ENCODE measurements at regions of chr3 and their contacts with region 1.

Region 1: DNA sequence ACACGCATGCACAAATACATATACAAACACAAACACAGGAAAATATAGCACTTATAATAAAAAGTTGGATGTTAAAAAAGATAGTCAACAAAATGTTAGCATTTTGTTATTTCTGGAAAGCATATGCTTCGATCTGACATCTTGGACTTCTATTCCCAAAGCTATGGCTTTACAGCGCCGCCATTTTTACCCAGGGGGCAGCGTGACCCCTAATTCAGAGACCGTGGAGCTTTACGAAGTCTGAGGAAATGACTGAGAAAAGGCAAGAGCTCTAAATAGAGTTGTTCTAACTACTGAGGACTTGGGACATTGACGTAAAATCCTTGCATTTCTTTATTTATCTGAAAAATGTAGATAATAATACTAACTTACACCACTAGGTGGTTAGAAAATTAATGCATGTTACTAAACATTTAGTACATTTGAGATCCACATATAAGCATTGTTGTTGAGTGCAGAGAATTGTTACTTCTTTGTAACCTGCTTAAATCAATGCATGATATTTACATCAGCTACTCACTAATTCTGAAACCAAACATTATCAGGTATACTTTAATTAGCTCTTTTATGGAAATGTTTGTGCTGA is 155.4 kb downstream of the TP63 start:
- DNase-seq: no peak
- H3K4me3 ChIP-seq: no peak overlapping the region
- H3K27ac ChIP-seq: no peak overlapping the region
- H3K4me1 ChIP-seq: peaks cover 28% of the 10 kb centered on the region
- H3K27me3 ChIP-seq: no peaks in the 10 kb centered on the region
- CTCF ChIP-seq: peak; percentile 50

Region 2: DNA sequence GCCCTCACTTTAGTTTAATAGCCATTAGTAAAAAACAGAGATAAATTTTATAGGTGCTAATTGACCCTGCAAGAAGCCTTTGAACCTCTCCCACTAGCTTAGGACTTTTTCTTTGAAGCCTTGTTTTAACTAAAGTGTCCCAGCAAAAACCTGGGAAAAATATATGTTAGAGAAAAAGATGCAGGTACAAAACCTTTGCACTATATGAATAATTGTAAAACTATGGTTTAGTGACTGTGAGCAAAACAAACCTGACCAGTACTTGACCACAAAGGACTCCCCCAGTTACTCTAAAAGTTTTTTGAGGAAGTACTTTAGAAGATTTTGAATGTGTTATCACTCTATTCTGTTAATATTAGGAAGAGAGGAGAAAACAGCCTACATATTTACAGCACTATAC is 278.7 kb before region 1 on chr3:
- CTCF ChIA-PET with region 1: no interaction called
- POLR2A ChIA-PET with region 1: no interaction called
- intact Hi-C with region 1: loop called (anchors 10 kb)
- DNase-seq: no peak
- H3K4me3 ChIP-seq: no peak overlapping the region
- H3K27ac ChIP-seq: no peak overlapping the region
- H3K4me1 ChIP-seq: peaks cover 22% of the 10 kb centered on the region
- H3K27me3 ChIP-seq: no peaks in the 10 kb centered on the region
- CTCF ChIP-seq: no peak